ENCODE measurements at regions of chr6 and their contacts with region 1.

Region 1: GRCh38 chr6:144215932-144216667 is 65.8 kb downstream of the STX11 start:
- DNase-seq: peak; percentile 91
- H3K4me3 Mint-ChIP-seq: peak overlapping the region; percentile 83
- H3K27ac Mint-ChIP-seq: peak overlapping the region; percentile 84
- H3K4me1 Mint-ChIP-seq: peaks cover 9% of the 10 kb centered on the region
- H3K27me3 Mint-ChIP-seq: no peaks in the 10 kb centered on the region
- CTCF ChIP-seq: peak; percentile 71

Region 2: GRCh38 chr6:144104898-144105487 is 111.1 kb before region 1 on chr6:
- CTCF ChIA-PET with region 1: interaction called, 7 read pairs
- POLR2A ChIA-PET with region 1: interaction called, 3 read pairs
- intact Hi-C with region 1: loop called (anchors 1 kb)
- DNase-seq: peak; percentile 80
- H3K4me3 Mint-ChIP-seq: no peak overlapping the region
- H3K27ac Mint-ChIP-seq: no peak overlapping the region
- H3K4me1 Mint-ChIP-seq: peaks cover 5% of the 10 kb centered on the region
- H3K27me3 Mint-ChIP-seq: no peaks in the 10 kb centered on the region
- CTCF ChIP-seq: peak; percentile 70

Region 3: GRCh38 chr6:144232176-144232831 is 16.2 kb after region 1 on chr6:
- CTCF ChIA-PET with region 1: interaction called, 15 read pairs
- POLR2A ChIA-PET with region 1: interaction called, 5 read pairs
- intact Hi-C with region 1: no loop called
- DNase-seq: no peak
- H3K4me3 Mint-ChIP-seq: no peak overlapping the region
- H3K27ac Mint-ChIP-seq: no peak overlapping the region
- H3K4me1 Mint-ChIP-seq: no peaks in the 10 kb centered on the region
- H3K27me3 Mint-ChIP-seq: no peaks in the 10 kb centered on the region
- CTCF ChIP-seq: no peak

Region 4: GRCh38 chr6:144284783-144285547 is 68.9 kb after region 1 on chr6 and contains the start of gene UTRN:
- CTCF ChIA-PET with region 1: interaction called, 9 read pairs
- POLR2A ChIA-PET with region 1: interaction called, 26 read pairs
- intact Hi-C with region 1: loop called (anchors 1 kb)
- DNase-seq: peak; percentile 89
- H3K4me3 Mint-ChIP-seq: peak within 1 kb of the TSS; percentile 97
- H3K27ac Mint-ChIP-seq: peak within 1 kb of the TSS; percentile 74
- H3K4me1 Mint-ChIP-seq: peaks cover 16% of the 10 kb centered on the region
- H3K27me3 Mint-ChIP-seq: no peaks in the 10 kb centered on the region
- CTCF ChIP-seq: no peak
- total RNA-seq, gene UTRN: 78.7 and 84.8 TPM in 2 replicates

Region 5: DNA sequence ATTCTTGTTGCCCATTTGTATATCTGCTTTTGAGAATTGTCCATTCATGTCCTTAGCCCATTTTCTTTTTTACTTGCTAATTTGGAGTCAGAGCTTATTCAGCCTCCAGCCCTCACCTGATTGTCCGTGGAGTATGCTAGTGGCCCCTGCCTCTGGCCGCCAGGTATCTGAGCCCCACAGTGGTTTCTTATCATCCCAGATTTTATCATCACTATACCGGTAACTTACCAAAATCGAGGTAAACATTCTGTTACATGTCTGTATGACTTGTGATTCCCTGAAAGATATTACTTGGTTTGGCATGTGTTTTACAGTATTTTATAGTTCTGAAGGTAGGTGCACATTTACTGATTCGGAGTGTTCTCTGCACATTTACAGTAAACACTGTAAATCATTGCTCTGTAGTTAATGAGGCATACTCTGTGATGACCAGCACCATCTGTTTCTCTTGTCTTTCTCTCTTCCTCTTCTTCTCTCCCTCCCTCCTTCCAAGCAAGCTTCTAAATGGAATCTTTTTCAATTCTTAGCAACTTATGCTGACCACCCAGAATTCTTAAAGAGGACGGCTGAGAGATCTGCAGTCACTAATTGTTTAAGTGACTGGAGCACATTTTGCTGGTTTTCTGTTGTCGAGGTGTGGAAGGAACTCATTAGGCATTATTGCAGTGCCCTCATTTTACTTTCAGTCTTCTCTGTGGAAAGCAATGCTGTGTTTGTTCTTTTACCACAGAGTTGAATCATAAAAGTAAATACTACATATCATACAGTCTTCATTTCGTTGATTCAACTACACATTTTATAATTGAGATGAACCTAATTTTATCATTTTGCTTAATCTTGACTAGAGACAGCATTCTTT is 195.5 kb after region 1 on chr6:
- CTCF ChIA-PET with region 1: no interaction called
- POLR2A ChIA-PET with region 1: no interaction called
- intact Hi-C with region 1: loop called (anchors 10 kb)
- DNase-seq: no peak
- H3K4me3 Mint-ChIP-seq: no peak overlapping the region
- H3K27ac Mint-ChIP-seq: no peak overlapping the region
- H3K4me1 Mint-ChIP-seq: peaks cover 32% of the 10 kb centered on the region
- H3K27me3 Mint-ChIP-seq: no peaks in the 10 kb centered on the region
- CTCF ChIP-seq: no peak

Region 6: DNA sequence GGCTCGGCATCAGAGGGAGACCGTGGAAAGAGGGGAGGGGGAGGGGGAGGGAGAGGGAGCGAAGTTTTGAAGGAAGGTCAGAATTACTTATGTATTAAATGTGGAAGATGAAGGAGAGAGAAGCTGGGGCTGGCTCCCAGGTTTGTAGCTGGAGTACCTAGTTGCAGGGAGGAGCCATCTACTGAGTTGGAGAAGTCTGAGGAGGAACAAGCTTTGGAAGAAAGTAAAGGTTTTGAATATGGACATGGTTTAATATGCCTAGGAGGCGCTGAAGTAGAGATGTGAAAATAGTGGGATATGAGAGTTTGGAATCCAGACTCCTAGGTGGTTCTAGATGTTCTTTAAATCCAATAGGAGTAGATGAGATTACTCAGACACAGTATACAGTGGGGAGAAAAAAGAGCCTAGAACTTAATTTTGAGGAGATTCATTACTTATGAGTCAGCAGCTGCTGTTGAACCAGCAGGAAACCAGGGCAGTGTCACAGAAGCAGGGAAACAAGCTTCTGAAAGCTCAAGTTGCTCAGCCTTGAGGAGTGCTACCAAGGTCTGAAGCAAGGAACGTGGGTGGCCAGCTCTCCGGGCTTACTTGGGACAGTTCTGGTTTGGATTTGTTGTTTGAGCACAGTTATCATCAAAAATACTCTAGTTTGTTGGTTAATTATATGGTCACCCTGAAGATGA is 218.3 kb after region 1 on chr6:
- CTCF ChIA-PET with region 1: no interaction called
- POLR2A ChIA-PET with region 1: no interaction called
- intact Hi-C with region 1: no loop called
- DNase-seq: peak; percentile 55
- H3K4me3 Mint-ChIP-seq: no peak overlapping the region
- H3K27ac Mint-ChIP-seq: no peak overlapping the region
- H3K4me1 Mint-ChIP-seq: peaks cover 11% of the 10 kb centered on the region
- H3K27me3 Mint-ChIP-seq: no peaks in the 10 kb centered on the region
- CTCF ChIP-seq: no peak

Region 7: GRCh38 chr6:144931172-144932035 is 715.3 kb after region 1 on chr6:
- CTCF ChIA-PET with region 1: no interaction called
- POLR2A ChIA-PET with region 1: no interaction called
- intact Hi-C with region 1: no loop called
- DNase-seq: peak; percentile 59
- H3K4me3 Mint-ChIP-seq: no peak overlapping the region
- H3K27ac Mint-ChIP-seq: no peak overlapping the region
- H3K4me1 Mint-ChIP-seq: no peaks in the 10 kb centered on the region
- H3K27me3 Mint-ChIP-seq: no peaks in the 10 kb centered on the region
- CTCF ChIP-seq: peak; percentile 52

Region 8: DNA sequence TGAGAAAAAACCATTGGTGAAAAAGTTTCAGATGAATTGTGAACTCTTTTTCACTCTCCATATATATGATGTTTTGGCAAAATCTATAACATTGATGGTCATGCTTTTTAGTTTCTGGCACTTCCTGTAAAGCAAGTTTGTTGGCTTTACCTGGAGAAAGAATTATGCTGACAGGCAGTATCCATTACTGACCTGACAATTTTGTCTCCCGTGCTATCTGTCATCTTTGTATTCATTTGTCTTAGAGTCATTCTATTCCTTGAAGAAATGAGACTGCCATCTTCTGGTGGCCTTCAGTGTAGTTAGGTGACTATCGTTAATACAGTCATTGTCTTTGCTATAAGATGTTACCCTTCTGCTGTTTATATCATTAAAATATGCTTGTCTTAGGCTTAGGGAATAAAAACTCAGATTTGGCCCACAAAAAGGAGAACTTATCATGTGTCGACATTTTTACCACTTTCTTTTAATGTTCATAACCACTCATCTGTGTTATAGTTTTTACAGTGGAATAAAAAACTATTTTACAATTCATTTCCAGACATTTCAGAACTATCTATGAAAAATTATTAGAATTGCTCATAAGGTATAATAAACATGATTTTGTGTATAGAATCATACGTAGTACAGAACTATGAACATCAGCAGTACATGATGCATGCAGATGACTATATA is 812.2 kb after region 1 on chr6:
- CTCF ChIA-PET with region 1: no interaction called
- POLR2A ChIA-PET with region 1: no interaction called
- intact Hi-C with region 1: loop called (anchors 2 kb)
- DNase-seq: peak; percentile 60
- H3K4me3 Mint-ChIP-seq: no peak overlapping the region
- H3K27ac Mint-ChIP-seq: no peak overlapping the region
- H3K4me1 Mint-ChIP-seq: no peaks in the 10 kb centered on the region
- H3K27me3 Mint-ChIP-seq: no peaks in the 10 kb centered on the region
- CTCF ChIP-seq: peak; percentile 23

Measured in MCF 10A (cell line).